ENCODE measurements at regions of chr18 and their contacts with region 1.

Region 1: DNA sequence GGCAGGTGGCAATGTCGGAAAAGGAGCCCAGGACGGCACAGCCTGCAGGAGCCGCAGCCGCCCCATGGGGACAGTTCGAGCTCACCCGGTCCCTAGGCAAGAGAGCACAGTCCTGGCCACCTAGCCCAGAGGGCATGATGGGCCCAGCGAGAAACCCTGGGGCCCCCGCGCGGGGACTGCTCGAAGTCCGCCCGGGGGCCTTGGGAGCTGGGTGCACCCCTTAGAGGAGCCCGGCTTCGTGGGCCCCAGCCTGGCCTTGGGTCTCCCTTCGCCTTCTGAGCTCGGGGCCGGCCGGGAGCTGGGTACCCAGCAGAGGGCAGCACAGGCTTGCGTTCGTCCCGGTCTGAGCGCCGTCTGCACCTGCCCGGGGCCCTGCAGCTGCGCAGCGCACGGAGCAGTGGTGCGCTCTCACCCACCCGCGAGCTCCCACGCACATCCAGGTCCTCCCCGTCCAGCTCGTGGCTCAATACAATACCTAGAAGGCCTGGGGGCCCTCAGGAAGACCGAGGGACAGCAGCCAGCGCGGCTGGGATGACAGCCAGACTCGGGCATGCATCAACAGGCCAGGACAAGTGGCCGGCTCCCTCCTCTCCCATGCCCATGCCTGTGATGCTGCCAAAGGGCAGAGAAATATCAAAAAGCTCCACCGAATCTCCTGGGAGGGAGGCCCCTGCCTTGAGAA is 96.2 kb upstream of the ZNF532 start:
- DNase-seq: peak; percentile 82
- ATAC-seq: peak; percentile 94

Region 2: GRCh38 chr18:58671111-58671631 is 97.3 kb before region 1 on chr18 and contains the start of gene MALT1:
- intact Hi-C with region 1: loop called (anchors 10 kb)
- DNase-seq: peak; percentile 95
- ATAC-seq: peak; percentile 98
- total RNA-seq, gene MALT1: 10.2 TPM